AG04450 (cell line): ENCODE measurements at regions of chr22 and their contacts with region 1.

Region 1: GRCh38 chr22:36856121-36856791 is 4.5 kb upstream of the NCF4 start:
- DNase-seq: peak; percentile 68
- H3K4me3 ChIP-seq: no peak overlapping the region
- H3K27ac ChIP-seq: no peak overlapping the region
- H3K27me3 ChIP-seq: peaks cover 13% of the 10 kb centered on the region
- CTCF ChIP-seq: peak; percentile 100

Region 2: DNA sequence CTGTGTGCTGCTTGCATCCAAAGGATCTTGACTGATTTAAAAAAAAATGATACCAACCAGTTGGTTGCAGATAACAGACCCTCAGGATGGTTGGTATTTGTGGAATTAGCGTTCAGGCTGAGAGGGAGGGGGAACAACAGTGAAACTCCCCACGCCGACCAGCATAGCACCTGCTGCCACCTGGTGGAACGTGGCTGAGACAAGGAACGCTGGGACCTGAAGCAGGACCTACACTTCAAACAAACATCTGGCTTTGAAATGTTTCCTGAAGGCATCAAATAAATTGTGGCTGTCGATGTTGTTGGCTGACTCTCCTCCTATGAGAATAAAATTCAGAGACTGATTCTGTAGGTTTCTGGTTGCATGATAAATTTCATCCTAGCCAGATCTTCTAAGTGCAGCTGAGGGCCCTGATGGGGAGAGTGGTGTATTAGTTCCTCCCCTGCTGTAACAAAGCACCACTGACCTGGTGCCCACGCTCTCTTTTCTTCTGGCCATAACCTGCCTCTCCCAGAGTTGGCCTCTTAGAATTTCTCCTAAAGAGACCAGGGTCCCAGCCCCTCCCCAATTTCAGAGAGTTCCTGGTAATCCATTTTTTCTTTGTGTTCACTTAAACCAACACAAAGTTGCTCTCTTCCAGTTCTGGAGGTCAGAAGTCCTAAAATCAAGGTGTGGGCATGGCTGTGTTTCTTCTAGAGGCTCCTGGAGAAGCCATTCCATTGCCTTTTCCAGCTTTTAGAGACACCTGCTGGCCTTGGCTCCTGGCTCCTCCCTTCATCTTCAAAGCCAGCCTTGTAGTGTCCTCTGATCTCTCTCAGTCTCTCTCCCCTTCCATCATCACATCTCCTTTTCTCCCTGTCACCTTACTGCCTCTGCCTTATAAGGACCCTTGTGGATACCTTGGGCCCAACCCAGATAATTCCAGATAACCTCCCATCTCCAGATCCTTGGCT is 634.2 kb before region 1 on chr22:
- CTCF ChIA-PET with region 1: no interaction called
- POLR2A ChIA-PET with region 1: no interaction called
- DNase-seq: no peak
- H3K4me3 ChIP-seq: no peak overlapping the region
- H3K27ac ChIP-seq: no peak overlapping the region
- H3K27me3 ChIP-seq: peaks cover 24% of the 10 kb centered on the region
- CTCF ChIP-seq: peak; percentile 68

Region 3: DNA sequence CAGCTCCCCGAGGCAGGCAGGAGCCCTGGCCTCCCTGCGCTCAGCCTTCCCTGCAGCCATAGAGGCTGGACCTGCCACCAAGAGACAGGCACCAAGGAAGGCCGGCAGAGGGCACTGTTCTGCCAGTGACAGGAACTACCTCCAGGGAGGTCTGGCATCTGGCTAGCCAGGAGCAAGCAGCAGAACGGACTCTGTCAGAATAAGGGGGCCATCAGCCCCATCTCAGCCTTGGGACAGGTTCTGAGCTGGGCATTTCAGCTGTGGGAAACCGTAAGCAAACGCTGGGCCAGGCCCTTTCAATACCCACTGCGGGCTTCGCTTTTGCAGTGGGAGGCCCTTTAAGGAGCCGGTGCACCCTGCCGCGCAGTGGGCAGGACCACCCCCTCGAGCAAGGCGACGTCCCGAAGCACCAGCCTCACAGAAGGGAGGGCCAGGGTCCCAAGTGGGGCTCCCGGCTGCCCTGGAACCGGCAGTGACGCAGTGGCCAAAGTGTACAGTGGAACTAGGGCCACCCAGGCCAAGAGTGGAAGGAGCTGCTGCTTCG is 98.5 kb before region 1 on chr22:
- CTCF ChIA-PET with region 1: interaction called, 28 read pairs
- POLR2A ChIA-PET with region 1: no interaction called
- DNase-seq: peak; percentile 38
- H3K4me3 ChIP-seq: no peak overlapping the region
- H3K27ac ChIP-seq: no peak overlapping the region
- H3K27me3 ChIP-seq: peaks cover 9% of the 10 kb centered on the region
- CTCF ChIP-seq: peak; percentile 83

Region 4: GRCh38 chr22:36781656-36782627 is 74.3 kb before region 1 on chr22:
- CTCF ChIA-PET with region 1: interaction called, 45 read pairs
- POLR2A ChIA-PET with region 1: no interaction called
- DNase-seq: peak; percentile 76
- H3K4me3 ChIP-seq: no peak overlapping the region
- H3K27ac ChIP-seq: peak overlapping the region; percentile 73
- H3K27me3 ChIP-seq: peaks cover 26% of the 10 kb centered on the region
- CTCF ChIP-seq: peak; percentile 86

Region 5: GRCh38 chr22:36881504-36882245 is 25.4 kb after region 1 on chr22:
- CTCF ChIA-PET with region 1: interaction called, 38 read pairs
- POLR2A ChIA-PET with region 1: no interaction called
- DNase-seq: no peak
- H3K4me3 ChIP-seq: no peak overlapping the region
- H3K27ac ChIP-seq: no peak overlapping the region
- H3K27me3 ChIP-seq: peaks cover 18% of the 10 kb centered on the region
- CTCF ChIP-seq: no peak

Region 6: GRCh38 chr22:36977947-36978660 is 121.8 kb after region 1 on chr22:
- CTCF ChIA-PET with region 1: interaction called, 14 read pairs
- POLR2A ChIA-PET with region 1: no interaction called
- DNase-seq: peak; percentile 49
- H3K4me3 ChIP-seq: peak overlapping the region; percentile 39
- H3K27ac ChIP-seq: no peak overlapping the region
- H3K27me3 ChIP-seq: peaks cover 12% of the 10 kb centered on the region
- CTCF ChIP-seq: peak; percentile 90

Region 7: GRCh38 chr22:37370306-37370979 is 514.2 kb after region 1 on chr22:
- CTCF ChIA-PET with region 1: no interaction called
- POLR2A ChIA-PET with region 1: no interaction called
- DNase-seq: no peak
- H3K4me3 ChIP-seq: no peak overlapping the region
- H3K27ac ChIP-seq: no peak overlapping the region
- H3K27me3 ChIP-seq: peaks cover 2% of the 10 kb centered on the region
- CTCF ChIP-seq: no peak